ENCODE measurements at regions of chr5 and their contacts with region 1.

Region 1: GRCh38 chr5:133825631-133826289 is 142.7 kb downstream of the C5orf15 start:
- DNase-seq: peak; percentile 77
- ATAC-seq: peak; percentile 72
- H3K4me3 ChIP-seq: no peak overlapping the region
- H3K27ac ChIP-seq: peak overlapping the region; percentile 6; the same call in 1 of the 2 replicates
- H3K4me1 ChIP-seq: peaks cover 33% of the 10 kb centered on the region
- H3K27me3 ChIP-seq: no peaks in the 10 kb centered on the region
- CTCF ChIP-seq: peak in 2 of 3 experiments; percentile 5 to 9; a peak in 1 of 6 replicates
- EP300 ChIP-seq: peak in 1 of 2 experiments; percentile 10; a peak in 1 of 4 replicates
- POLR2A ChIP-seq: no peak
- RAD21 ChIP-seq: no peak

Region 2: GRCh38 chr5:133709209-133709725 is 116.5 kb before region 1 on chr5:
- CTCF ChIA-PET with region 1: no interaction called
- POLR2A ChIA-PET with region 1: no interaction called
- RAD21 ChIA-PET with region 1: no interaction called
- SMC1A ChIA-PET with region 1: no interaction called
- in situ Hi-C with region 1: no loop called
- intact Hi-C with region 1: no loop called
- DNase-seq: no peak
- ATAC-seq: no peak
- H3K4me3 ChIP-seq: no peak overlapping the region
- H3K27ac ChIP-seq: no peak overlapping the region
- H3K4me1 ChIP-seq: no peaks in the 10 kb centered on the region
- H3K27me3 ChIP-seq: peaks cover 0 to 4% of the 10 kb centered on the region in 2 experiments; a peak in 2 of 4 replicates
- CTCF ChIP-seq: no peak
- EP300 ChIP-seq: no peak
- POLR2A ChIP-seq: no peak
- RAD21 ChIP-seq: no peak

Region 3: DNA sequence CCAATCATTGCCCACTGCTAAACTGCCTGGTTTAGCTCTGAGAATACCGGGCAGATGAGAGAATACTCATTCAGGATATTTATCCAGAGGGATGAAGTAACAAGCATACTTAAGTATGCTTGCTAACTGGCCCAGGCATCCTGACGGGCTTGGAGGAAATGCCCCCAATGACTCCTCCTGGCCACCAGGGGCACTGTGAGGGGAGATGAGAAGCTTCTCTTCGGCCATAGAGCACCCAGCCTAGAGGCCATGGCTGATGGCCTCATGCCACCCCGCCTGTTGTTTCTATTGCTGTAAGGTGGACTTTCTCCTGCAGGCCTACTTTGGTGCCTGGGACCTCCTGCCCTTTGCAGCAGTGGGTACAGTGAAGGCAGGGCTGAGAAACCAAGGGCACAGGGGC is 78.9 kb before region 1 on chr5:
- CTCF ChIA-PET with region 1: interaction called, 5 read pairs
- POLR2A ChIA-PET with region 1: interaction called, 4 read pairs
- RAD21 ChIA-PET with region 1: interaction called, 6 read pairs
- SMC1A ChIA-PET with region 1: interaction called, 38 read pairs
- in situ Hi-C with region 1: no loop called
- intact Hi-C with region 1: no loop called
- DNase-seq: no peak
- ATAC-seq: no peak
- H3K4me3 ChIP-seq: no peak overlapping the region
- H3K27ac ChIP-seq: no peak overlapping the region
- H3K4me1 ChIP-seq: peaks cover 4% of the 10 kb centered on the region
- H3K27me3 ChIP-seq: no peaks in the 10 kb centered on the region; a peak in 1 of 4 replicates
- CTCF ChIP-seq: peak in 2 of 3 experiments; percentile 31 to 38; a peak in 3 of 6 replicates
- EP300 ChIP-seq: no peak
- POLR2A ChIP-seq: no peak
- RAD21 ChIP-seq: no peak

Region 4: GRCh38 chr5:133861161-133861737 is 35.5 kb after region 1 on chr5:
- CTCF ChIA-PET with region 1: interaction called, 77 read pairs
- POLR2A ChIA-PET with region 1: interaction called, 3 read pairs
- RAD21 ChIA-PET with region 1: interaction called, 49 read pairs
- SMC1A ChIA-PET with region 1: interaction called, 20 read pairs
- in situ Hi-C with region 1: no loop called
- intact Hi-C with region 1: no loop called
- DNase-seq: no peak
- ATAC-seq: peak; percentile 93
- H3K4me3 ChIP-seq: no peak overlapping the region
- H3K27ac ChIP-seq: no peak overlapping the region
- H3K4me1 ChIP-seq: peaks cover 4% of the 10 kb centered on the region
- H3K27me3 ChIP-seq: no peaks in the 10 kb centered on the region; a peak in 1 of 4 replicates
- CTCF ChIP-seq: no peak
- EP300 ChIP-seq: no peak
- POLR2A ChIP-seq: no peak
- RAD21 ChIP-seq: no peak

Region 5: DNA sequence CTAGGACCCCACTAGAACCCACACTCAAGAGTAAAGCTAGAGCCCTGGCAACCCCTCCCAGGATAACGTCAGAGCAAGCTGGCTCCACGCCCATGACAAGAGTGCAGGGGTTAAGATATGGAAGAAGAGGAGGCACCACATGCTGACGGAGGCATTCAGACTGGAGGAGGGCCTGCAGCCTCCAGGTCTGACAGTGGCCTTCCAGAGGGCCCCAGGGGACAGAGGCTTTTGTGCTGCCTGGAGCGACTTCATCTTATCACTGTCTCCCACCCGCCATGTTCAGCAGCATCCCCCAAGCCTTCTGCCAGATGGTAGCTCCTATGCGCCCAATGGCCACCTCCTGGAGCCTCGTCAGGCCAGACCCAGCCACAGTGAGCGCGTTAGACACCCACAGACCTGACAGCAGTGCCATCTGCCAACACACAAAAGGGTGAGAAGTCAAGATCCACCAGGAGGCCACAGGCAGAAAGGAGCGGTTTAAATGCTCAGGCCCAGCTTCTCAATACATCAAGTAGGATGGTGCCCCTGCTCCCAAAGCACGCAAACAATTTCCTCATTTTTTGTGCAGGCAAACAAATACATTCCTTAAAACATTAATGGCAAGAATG is 76.9 kb after region 1 on chr5:
- CTCF ChIA-PET with region 1: no interaction called
- POLR2A ChIA-PET with region 1: no interaction called
- RAD21 ChIA-PET with region 1: no interaction called
- SMC1A ChIA-PET with region 1: no interaction called
- in situ Hi-C with region 1: no loop called
- intact Hi-C with region 1: no loop called
- DNase-seq: no peak
- ATAC-seq: no peak
- H3K4me3 ChIP-seq: no peak overlapping the region
- H3K27ac ChIP-seq: no peak overlapping the region
- H3K4me1 ChIP-seq: no peaks in the 10 kb centered on the region
- H3K27me3 ChIP-seq: no peaks in the 10 kb centered on the region; a peak in 1 of 4 replicates
- CTCF ChIP-seq: no peak
- EP300 ChIP-seq: no peak
- POLR2A ChIP-seq: no peak
- RAD21 ChIP-seq: no peak

Measured in GM12878 (cell line).